ENCODE measurements at regions of chr15 and their contacts with region 1.

Region 1: GRCh38 chr15:57527382-57528091 is 64.2 kb upstream of the MYZAP start:
- DNase-seq: peak in 4 of 5 donors; percentile 45 to 64 (median 58)
- H3K4me3 ChIP-seq: no peak overlapping the region
- H3K27ac ChIP-seq: no peak overlapping the region
- H3K4me1 ChIP-seq: peaks cover 4% of the 10 kb centered on the region
- H3K27me3 ChIP-seq: no peaks in the 10 kb centered on the region
- CTCF ChIP-seq: peak; percentile 66 to 78 (median 74)
- EP300 ChIP-seq: no peak
- POLR2A ChIP-seq: no peak

Region 2: GRCh38 chr15:57158589-57158988 is 368.9 kb before region 1 on chr15:
- intact Hi-C with region 1: loop called in 1 of 4 experiments (anchors 10 kb)
- DNase-seq: no peak
- H3K4me3 ChIP-seq: no peak overlapping the region
- H3K27ac ChIP-seq: no peak overlapping the region
- H3K4me1 ChIP-seq: peaks cover 5% of the 10 kb centered on the region
- H3K27me3 ChIP-seq: no peaks in the 10 kb centered on the region
- CTCF ChIP-seq: no peak
- EP300 ChIP-seq: no peak
- POLR2A ChIP-seq: no peak

Region 3: GRCh38 chr15:57334257-57334656 is 193.3 kb before region 1 on chr15:
- intact Hi-C with region 1: loop called in 2 of 4 experiments (anchors 2 kb)
- DNase-seq: peak in 1 of 5 donors; percentile 27
- H3K4me3 ChIP-seq: no peak overlapping the region
- H3K27ac ChIP-seq: no peak overlapping the region
- H3K4me1 ChIP-seq: no peaks in the 10 kb centered on the region
- H3K27me3 ChIP-seq: no peaks in the 10 kb centered on the region
- CTCF ChIP-seq: no peak
- EP300 ChIP-seq: no peak
- POLR2A ChIP-seq: no peak

Region 4: DNA sequence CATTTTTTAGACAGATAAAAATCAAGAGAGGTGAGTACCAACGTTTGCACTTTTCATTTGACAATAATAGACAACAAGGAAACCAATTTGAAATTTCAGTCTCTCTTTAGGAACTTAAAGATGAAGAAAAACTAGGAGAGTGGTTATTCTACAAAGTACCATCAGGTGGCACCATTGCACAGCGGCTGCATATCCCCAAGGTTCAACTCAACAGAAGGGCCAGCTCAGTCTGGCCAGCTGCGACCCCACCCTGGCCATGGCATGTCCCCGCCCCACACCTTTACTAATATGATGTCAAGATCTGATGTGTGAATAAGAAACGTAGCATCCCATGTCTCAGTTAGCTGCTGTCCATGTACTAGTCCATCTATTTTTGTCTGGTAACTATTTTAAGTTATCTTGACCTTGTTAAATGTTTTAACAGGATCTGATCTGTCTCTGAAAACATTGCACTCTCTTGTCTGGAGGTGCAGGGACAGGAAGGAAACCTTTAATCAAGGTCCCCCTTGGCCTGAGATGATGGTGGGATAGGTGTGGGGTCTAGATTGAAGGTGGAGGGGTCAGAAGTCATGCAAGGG is 186.8 kb before region 1 on chr15:
- intact Hi-C with region 1: loop called (anchors 2 kb)
- DNase-seq: peak; percentile 40 to 64 (median 55)
- H3K4me3 ChIP-seq: no peak overlapping the region
- H3K27ac ChIP-seq: no peak overlapping the region
- H3K4me1 ChIP-seq: no peaks in the 10 kb centered on the region
- H3K27me3 ChIP-seq: no peaks in the 10 kb centered on the region
- CTCF ChIP-seq: peak; percentile 84 to 85 (median 84)
- EP300 ChIP-seq: no peak
- POLR2A ChIP-seq: no peak

Region 5: GRCh38 chr15:57375827-57376695 is 151.5 kb before region 1 on chr15 and contains the start of gene CGNL1:
- intact Hi-C with region 1: loop called in 1 of 4 experiments (anchors 10 kb)
- DNase-seq: peak; percentile 51 to 78 (median 66)
- H3K4me3 ChIP-seq: peak within 1 kb of the TSS; percentile 87
- H3K27ac ChIP-seq: peak within 1 kb of the TSS in 1 of 2 donors; percentile 48
- H3K4me1 ChIP-seq: peaks cover 4% of the 10 kb centered on the region
- H3K27me3 ChIP-seq: no peaks in the 10 kb centered on the region
- CTCF ChIP-seq: no peak
- EP300 ChIP-seq: no peak
- POLR2A ChIP-seq: peak; percentile 10
- total RNA-seq, gene CGNL1: 7.8 to 26.1 (median 13.6) TPM

Region 6: DNA sequence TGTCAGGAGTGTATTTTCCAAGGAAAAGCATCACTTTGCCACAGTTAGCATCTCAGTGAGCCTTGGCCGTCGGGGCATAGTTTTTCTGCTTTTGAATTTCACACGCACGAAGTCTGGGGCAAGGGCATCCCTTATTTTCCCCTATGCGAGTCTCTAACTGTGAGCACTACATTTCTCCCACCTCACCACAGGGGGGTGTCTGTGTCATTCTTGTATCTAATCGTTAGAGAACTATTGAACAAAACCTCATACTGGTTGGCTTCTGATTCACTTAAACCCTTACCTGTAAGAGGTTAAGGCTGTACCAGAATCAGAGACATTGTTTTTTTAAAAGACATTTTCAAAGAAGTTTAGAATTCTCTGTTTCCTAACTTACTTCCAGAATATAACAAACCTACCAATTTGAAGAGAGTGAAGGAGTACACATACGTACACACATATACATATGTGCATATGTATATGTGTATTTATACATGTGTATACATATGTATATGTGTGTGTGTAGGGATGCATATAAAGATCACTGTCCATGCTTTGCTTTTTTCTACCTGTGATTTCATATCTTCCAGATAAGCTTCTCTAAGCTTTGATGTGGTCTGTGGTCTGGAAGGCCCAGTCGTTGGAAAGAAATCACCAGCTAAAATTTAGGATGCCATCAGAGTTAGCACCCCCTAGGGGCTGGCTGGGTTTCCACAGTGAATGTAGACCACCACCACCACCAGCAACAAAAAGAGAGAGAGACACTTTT is 113.6 kb after region 1 on chr15:
- intact Hi-C with region 1: no loop called
- DNase-seq: no peak
- H3K4me3 ChIP-seq: no peak overlapping the region
- H3K27ac ChIP-seq: no peak overlapping the region
- H3K4me1 ChIP-seq: peaks cover 2% of the 10 kb centered on the region
- H3K27me3 ChIP-seq: no peaks in the 10 kb centered on the region
- CTCF ChIP-seq: no peak
- EP300 ChIP-seq: no peak
- POLR2A ChIP-seq: no peak

Measured in ovary (tissue), 10 donors.